ENCODE measurements at regions of chr11 and their contacts with region 1.

Region 1: GRCh38 chr11:43699870-43700269 is 19.3 kb downstream of the HSD17B12 start:
- DNase-seq: no peak
- ATAC-seq: no peak
- H3K4me3 ChIP-seq: no peak overlapping the region
- H3K4me3 Mint-ChIP-seq: no peak overlapping the region
- H3K27ac ChIP-seq: no peak overlapping the region
- H3K27ac Mint-ChIP-seq: no peak overlapping the region
- H3K4me1 ChIP-seq: no peaks in the 10 kb centered on the region
- H3K4me1 Mint-ChIP-seq: peaks cover 0 to 23% (median 11%) of the 10 kb centered on the region in 7 donors
- H3K27me3 ChIP-seq: no peaks in the 10 kb centered on the region
- H3K27me3 Mint-ChIP-seq: no peaks in the 10 kb centered on the region

Region 2: DNA sequence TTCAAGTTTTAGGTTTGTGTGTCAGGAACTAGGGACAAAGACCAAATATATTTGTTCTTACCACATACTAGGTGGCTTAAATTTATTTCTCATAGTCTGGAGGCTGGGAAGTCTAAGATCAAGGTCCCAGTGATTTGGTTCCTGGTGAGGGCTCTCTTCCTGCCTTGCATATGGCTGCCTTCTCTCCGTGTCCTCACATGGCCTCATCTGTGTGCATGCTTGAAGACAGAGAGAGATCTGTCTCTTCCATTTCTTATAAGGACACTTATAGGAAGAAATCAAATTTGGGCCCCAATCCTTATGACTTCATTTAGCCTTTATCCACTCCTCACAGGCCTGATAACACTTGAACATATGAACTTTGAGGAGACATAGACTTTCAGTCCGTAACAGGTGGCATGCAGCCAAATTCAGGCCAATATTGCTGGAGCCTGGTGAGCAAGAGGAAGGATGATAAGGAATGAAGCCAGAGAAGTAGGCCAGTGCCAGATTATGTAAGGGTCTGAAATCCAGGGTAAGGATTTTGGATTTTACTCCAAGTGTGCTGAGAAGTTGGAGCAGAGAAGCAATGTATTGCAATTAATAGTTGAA is 306.0 kb before region 1 on chr11:
- CTCF ChIA-PET with region 1: no interaction called
- POLR2A ChIA-PET with region 1: no interaction called
- intact Hi-C with region 1: no loop called
- DNase-seq: no peak
- ATAC-seq: no peak
- H3K4me3 ChIP-seq: no peak overlapping the region
- H3K4me3 Mint-ChIP-seq: no peak overlapping the region
- H3K27ac ChIP-seq: no peak overlapping the region
- H3K27ac Mint-ChIP-seq: peak overlapping the region in 1 of 9 donors; percentile 71
- H3K4me1 ChIP-seq: no peaks in the 10 kb centered on the region
- H3K4me1 Mint-ChIP-seq: peaks cover 0 to 32% (median 7%) of the 10 kb centered on the region in 7 donors
- H3K27me3 ChIP-seq: no peaks in the 10 kb centered on the region
- H3K27me3 Mint-ChIP-seq: no peaks in the 10 kb centered on the region

Region 3: GRCh38 chr11:44016131-44016530 is 316.3 kb after region 1 on chr11:
- CTCF ChIA-PET with region 1: no interaction called
- POLR2A ChIA-PET with region 1: no interaction called
- intact Hi-C with region 1: loop called in 1 of 2 experiments (anchors 5 kb)
- DNase-seq: no peak
- ATAC-seq: no peak
- H3K4me3 ChIP-seq: no peak overlapping the region
- H3K4me3 Mint-ChIP-seq: no peak overlapping the region
- H3K27ac ChIP-seq: no peak overlapping the region
- H3K27ac Mint-ChIP-seq: no peak overlapping the region
- H3K4me1 ChIP-seq: no peaks in the 10 kb centered on the region
- H3K4me1 Mint-ChIP-seq: peaks cover 0 to 2% (median 0%) of the 10 kb centered on the region in 7 donors
- H3K27me3 ChIP-seq: no peaks in the 10 kb centered on the region
- H3K27me3 Mint-ChIP-seq: peaks cover 3 to 16% (median 6%) of the 10 kb centered on the region in 5 donors

Measured in naive thymus-derived CD4-positive, alpha-beta T cell (primary cell).